OCI-LY7 (cell line): ENCODE measurements at regions of chr14 and their contacts with region 1.

Region 1: GRCh38 chr14:23301288-23301968 is 1.2 kb downstream of the PPP1R3E start:
- DNase-seq: peak; percentile 99
- H3K4me3 ChIP-seq: peak overlapping the region; percentile 96
- H3K27ac ChIP-seq: peak overlapping the region; percentile 88
- H3K4me1 ChIP-seq: peaks cover 34% of the 10 kb centered on the region
- CTCF ChIP-seq: peak; percentile 79

Region 2: DNA sequence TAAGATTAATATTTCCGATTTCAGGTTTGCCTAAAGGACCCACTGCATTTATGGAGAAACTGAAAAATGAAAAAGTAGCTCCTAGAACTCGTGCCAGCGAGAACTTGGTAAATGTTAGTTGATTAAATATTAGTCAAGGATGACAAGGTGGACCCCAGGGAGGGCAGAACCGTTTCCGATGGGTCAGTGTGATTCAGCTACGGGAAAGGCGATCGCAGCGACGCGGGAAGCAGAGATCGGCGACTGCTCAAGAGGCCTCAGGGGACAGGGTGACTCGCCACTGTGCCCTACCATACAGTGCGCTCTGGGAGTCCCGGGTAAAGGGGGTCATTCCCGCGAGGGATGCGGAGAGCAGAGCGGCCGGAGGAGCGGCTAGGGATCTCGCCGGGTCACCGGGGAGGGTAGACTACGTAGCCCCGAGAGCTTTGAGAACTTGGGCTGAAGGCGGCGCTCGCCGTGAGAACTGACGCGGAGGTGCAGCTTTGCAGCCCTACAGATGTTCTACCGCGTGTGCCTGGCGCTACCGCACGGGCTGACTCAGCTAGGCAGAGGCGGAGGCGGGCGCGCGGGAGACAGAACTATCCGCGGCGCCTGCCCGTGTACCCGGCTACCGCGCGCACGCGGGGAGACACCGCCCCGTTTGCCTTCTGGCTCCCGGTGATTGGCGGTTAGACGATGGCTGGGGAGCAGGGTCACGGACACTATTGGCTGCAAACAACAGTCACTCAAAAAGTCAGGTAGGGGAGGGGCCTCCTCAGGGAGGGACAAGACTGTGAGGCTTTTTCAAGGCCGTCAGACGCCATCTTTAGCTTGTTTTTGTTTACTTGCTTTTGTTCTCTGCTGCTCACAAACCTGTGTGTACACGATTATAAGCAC is 294.6 kb before region 1 on chr14:
- CTCF ChIA-PET with region 1: no interaction called
- POLR2A ChIA-PET with region 1: no interaction called
- intact Hi-C with region 1: loop called (anchors 5 kb)
- DNase-seq: peak; percentile 98
- H3K4me3 ChIP-seq: peak overlapping the region; percentile 80
- H3K27ac ChIP-seq: peak overlapping the region; percentile 82
- H3K4me1 ChIP-seq: peaks cover 44% of the 10 kb centered on the region
- CTCF ChIP-seq: peak; percentile 47

Region 3: DNA sequence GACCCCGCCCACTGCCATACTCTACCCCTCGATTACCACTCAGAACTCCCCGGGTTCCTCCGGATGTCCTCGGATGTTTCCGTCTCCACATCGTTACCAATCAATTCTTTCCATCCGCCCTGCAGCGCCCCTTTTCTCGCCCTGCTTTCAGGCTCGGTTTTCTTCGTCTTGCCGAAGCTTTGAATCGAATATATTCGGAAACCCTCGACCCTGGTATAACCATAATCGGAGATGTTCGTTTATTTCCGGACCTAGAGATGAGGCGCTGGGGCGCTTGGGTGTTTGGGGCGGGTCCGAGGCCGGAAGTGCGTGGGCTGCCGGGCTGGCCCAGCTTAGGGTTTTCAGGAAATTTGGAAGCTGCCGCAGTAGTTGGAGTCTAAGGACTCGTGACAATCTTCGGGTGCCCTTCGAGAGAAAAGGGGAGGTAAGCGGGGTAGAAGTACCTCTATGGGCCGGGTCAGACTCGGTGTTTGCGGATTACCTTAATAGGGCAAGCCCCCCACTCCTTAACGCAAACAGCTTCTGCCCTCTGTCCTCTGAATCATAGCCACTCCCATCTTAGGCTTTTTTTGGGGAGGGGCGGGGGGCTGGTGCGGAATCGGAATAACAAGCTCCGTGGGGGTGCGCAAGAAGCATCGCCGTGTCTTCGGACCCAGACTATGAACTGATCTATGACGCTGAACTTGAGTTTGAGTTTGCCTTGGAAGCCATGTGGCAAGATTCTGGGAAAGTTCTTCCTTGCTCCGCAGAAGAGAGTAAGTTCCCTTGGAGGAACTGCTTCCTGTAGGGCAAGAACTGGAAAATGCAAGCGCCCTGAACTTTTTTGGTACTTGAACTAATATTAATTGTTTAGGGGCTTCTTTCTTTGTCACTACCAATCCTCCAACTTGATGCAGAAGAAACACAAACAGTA is 206.0 kb before region 1 on chr14 and contains the start of gene C14orf119:
- CTCF ChIA-PET with region 1: no interaction called
- POLR2A ChIA-PET with region 1: interaction called, 13 read pairs
- intact Hi-C with region 1: no loop called
- DNase-seq: peak; percentile 100
- H3K4me3 ChIP-seq: peak within 1 kb of the TSS; percentile 92
- H3K27ac ChIP-seq: peak within 1 kb of the TSS; percentile 81
- H3K4me1 ChIP-seq: peaks cover 23% of the 10 kb centered on the region
- CTCF ChIP-seq: no peak
- total RNA-seq, gene C14orf119: 25.9 and 44.5 TPM in 2 replicates

Region 4: DNA sequence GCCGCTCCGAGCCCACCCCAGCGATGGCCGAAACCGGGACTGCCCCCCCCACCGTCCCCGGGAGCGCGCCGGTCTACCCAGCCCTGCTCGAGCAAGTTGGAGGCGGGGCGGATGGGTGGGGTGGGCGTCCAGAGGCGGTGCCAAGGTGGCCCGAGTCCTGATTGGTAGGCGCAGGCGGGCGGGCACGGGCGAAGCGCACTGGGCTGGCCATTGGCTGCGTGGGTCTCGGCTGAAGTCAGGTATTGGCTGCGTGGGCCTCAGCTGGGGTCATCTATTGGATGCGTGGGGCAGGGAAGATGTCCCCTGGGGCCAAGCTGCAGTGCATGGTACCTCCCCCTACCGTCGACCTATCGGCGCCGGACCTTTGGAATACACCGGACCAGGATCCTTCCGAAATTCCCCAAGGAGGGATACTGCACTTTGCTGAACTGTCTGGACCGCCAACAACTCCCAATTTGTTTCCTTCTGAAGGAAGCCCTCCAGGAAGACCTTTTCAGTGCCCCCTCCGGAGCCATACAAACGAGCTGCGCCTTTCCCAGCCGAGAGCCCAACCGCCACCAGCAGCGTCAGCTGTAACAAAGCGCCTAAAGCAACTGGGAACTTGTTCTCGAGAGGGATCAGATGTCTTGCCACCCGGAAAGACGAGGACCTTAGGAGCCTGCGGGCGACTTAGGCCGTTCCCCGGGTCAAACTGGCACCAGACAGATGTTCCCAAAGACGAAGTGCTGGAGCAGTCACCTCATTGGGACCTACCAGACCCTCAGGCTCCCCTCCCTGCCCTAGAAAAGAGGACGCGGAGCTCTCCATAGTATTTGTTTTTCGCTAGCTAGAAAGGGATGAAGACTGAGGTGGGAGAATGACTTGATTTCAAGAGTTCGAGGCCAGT is 15.2 kb before region 1 on chr14 and contains the start of gene HOMEZ:
- CTCF ChIA-PET with region 1: interaction called, 4 read pairs
- POLR2A ChIA-PET with region 1: interaction called, 13 read pairs
- intact Hi-C with region 1: loop called (anchors 1 kb)
- DNase-seq: peak; percentile 98
- H3K4me3 ChIP-seq: peak within 1 kb of the TSS; percentile 91
- H3K27ac ChIP-seq: peak within 1 kb of the TSS; percentile 28
- H3K4me1 ChIP-seq: peaks cover 13% of the 10 kb centered on the region
- CTCF ChIP-seq: peak; percentile 27; the same call in 1 of the 2 replicates
- total RNA-seq, gene HOMEZ: 6.3 and 7.1 TPM in 2 replicates

Region 5: GRCh38 chr14:23345987-23346692 is 44.7 kb after region 1 on chr14:
- CTCF ChIA-PET with region 1: no interaction called
- POLR2A ChIA-PET with region 1: no interaction called
- intact Hi-C with region 1: no loop called
- DNase-seq: no peak
- H3K4me3 ChIP-seq: no peak overlapping the region
- H3K27ac ChIP-seq: no peak overlapping the region
- H3K4me1 ChIP-seq: no peaks in the 10 kb centered on the region
- CTCF ChIP-seq: no peak

Region 6: DNA sequence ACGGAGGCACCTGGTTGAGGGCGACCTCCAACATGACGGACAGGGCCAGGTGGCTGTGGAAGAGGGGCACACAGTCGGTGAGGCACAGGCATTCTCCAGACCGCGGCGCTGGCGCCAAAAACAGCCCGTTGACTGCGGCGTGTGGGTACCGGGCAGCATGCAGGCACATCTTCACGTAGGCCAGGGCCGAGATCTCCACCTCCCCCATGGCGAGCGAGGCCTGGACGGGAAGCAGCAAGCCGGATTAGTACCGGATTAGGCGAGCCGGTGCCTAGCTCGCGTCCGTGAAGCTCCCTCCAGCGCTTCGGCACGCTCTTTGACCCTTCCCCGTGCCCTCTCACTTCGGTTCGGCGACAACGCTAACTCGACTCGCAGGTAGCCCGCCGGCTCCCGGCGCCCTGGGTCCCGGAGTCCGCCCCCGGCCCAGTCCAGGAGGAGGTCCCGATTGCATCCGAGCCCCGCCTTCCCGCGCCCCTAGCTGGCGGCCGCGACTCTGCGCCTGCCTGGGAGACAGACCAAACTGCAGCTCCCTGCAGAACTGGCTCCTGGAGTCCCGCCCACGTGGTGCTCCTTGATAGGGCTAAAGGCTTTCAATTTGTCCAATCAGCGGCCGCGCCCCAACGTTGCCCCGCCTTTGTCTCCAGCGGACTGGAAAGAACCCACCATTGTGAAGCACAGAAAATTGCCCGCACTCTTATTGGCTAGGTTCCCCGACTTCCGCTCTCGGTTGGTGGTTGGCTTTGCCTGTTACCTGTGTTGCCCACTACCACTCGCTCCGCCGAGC is 839.9 kb after region 1 on chr14 and contains the start of gene EMC9:
- CTCF ChIA-PET with region 1: no interaction called
- POLR2A ChIA-PET with region 1: no interaction called
- intact Hi-C with region 1: loop called (anchors 10 kb)
- DNase-seq: peak; percentile 100
- H3K4me3 ChIP-seq: peak within 1 kb of the TSS; percentile 85
- H3K27ac ChIP-seq: peak within 1 kb of the TSS; percentile 81
- H3K4me1 ChIP-seq: peaks cover 44% of the 10 kb centered on the region
- CTCF ChIP-seq: peak; percentile 51
- total RNA-seq, gene EMC9: 73.2 and 74.8 TPM in 2 replicates